ENCODE measurements at regions of chr2 and their contacts with region 1.

Region 1: GRCh38 chr2:223957092-223957851 is at the start of gene MRPL44:
- H3K4me3 Mint-ChIP-seq: peak within 1 kb of the TSS; percentile 95
- H3K27ac Mint-ChIP-seq: peak within 1 kb of the TSS; percentile 99
- H3K4me1 Mint-ChIP-seq: peaks cover 36% of the 10 kb centered on the region
- H3K27me3 Mint-ChIP-seq: no peaks in the 10 kb centered on the region

Region 2: GRCh38 chr2:223837287-223838061 is 119.8 kb before region 1 on chr2 and contains the start of gene AP1S3:
- intact Hi-C with region 1: loop called (anchors 5 kb)
- H3K4me3 Mint-ChIP-seq: peak within 1 kb of the TSS; percentile 91
- H3K27ac Mint-ChIP-seq: peak within 1 kb of the TSS; percentile 67
- H3K4me1 Mint-ChIP-seq: peaks cover 27% of the 10 kb centered on the region
- H3K27me3 Mint-ChIP-seq: peaks cover 7% of the 10 kb centered on the region

Region 3: GRCh38 chr2:223944703-223945531 is 12.4 kb before region 1 on chr2 and contains the start of gene WDFY1:
- intact Hi-C with region 1: loop called (anchors 1 kb)
- H3K4me3 Mint-ChIP-seq: peak within 1 kb of the TSS; percentile 99
- H3K27ac Mint-ChIP-seq: peak within 1 kb of the TSS; percentile 99
- H3K4me1 Mint-ChIP-seq: peaks cover 19% of the 10 kb centered on the region
- H3K27me3 Mint-ChIP-seq: no peaks in the 10 kb centered on the region

Measured in dendritic cell treated with granulocyte-macrophage colony-stimulating factor and Interleukin-4, amounts not matched to agents 40 ng/mL and 50 ng/mL, for 4 days (primary cell).